ENCODE measurements at regions of chr11 and their contacts with region 1.

Region 1: GRCh38 chr11:6635082-6635932 is 16.1 kb upstream of the TPP1 start:
- DNase-seq: peak in 2 of 4 experiments; percentile 47 to 70
- ATAC-seq: peak; percentile 51
- H3K4me3 ChIP-seq: no peak overlapping the region
- H3K27ac ChIP-seq: peak overlapping the region; percentile 57
- H3K4me1 ChIP-seq: peaks cover 30% of the 10 kb centered on the region in 2 experiments
- H3K27me3 ChIP-seq: no peaks in the 10 kb centered on the region
- CTCF ChIP-seq: no peak
- EP300 ChIP-seq: peak; percentile 32; the same call in 1 of the 2 replicates
- POLR2A ChIP-seq: no peak
- RAD21 ChIP-seq: no peak

Region 2: GRCh38 chr11:6377902-6378639 is 257.2 kb before region 1 on chr11:
- CTCF ChIA-PET with region 1: no interaction called
- POLR2A ChIA-PET with region 1: no interaction called
- in situ Hi-C with region 1: no loop called
- intact Hi-C with region 1: loop called (anchors 10 kb)
- DNase-seq: no peak
- ATAC-seq: peak; percentile 62
- H3K4me3 ChIP-seq: no peak overlapping the region
- H3K27ac ChIP-seq: no peak overlapping the region
- H3K4me1 ChIP-seq: peaks cover 0 to 6% of the 10 kb centered on the region in 2 experiments; a peak in 2 of 5 replicates
- H3K27me3 ChIP-seq: peaks cover 15 to 23% of the 10 kb centered on the region in 2 experiments; a peak in 3 of 5 replicates
- CTCF ChIP-seq: no peak
- EP300 ChIP-seq: no peak
- POLR2A ChIP-seq: no peak
- RAD21 ChIP-seq: no peak

Region 3: GRCh38 chr11:6619004-6619745 is 16.1 kb before region 1 on chr11 and contains the start of gene TPP1:
- CTCF ChIA-PET with region 1: no interaction called
- POLR2A ChIA-PET with region 1: interaction called, 13 read pairs
- in situ Hi-C with region 1: no loop called
- intact Hi-C with region 1: loop called (anchors 2 kb)
- DNase-seq: peak; percentile 92 to 97 (median 94)
- ATAC-seq: peak; percentile 97
- H3K4me3 ChIP-seq: peak within 1 kb of the TSS; percentile 71
- H3K27ac ChIP-seq: peak within 1 kb of the TSS; percentile 86
- H3K4me1 ChIP-seq: peaks cover 8 to 36% of the 10 kb centered on the region in 2 experiments
- H3K27me3 ChIP-seq: peaks cover 0 to 9% of the 10 kb centered on the region in 2 experiments; a peak in 1 of 5 replicates
- CTCF ChIP-seq: no peak
- EP300 ChIP-seq: no peak; the same call in 1 of the 2 replicates
- POLR2A ChIP-seq: peak; percentile 78
- RAD21 ChIP-seq: 0 out of 4 replicates have a peak, but pooled peaks of 1 of the 2 experiments have one; percentile 3
- polyA plus RNA-seq, gene TPP1: 9.4 to 15.7 TPM

Region 4: GRCh38 chr11:6646918-6647679 is 11.8 kb after region 1 on chr11:
- CTCF ChIA-PET with region 1: no interaction called
- POLR2A ChIA-PET with region 1: interaction called, 12 read pairs
- in situ Hi-C with region 1: no loop called
- intact Hi-C with region 1: no loop called
- DNase-seq: no peak
- ATAC-seq: peak; percentile 44
- H3K4me3 ChIP-seq: no peak overlapping the region
- H3K27ac ChIP-seq: no peak overlapping the region
- H3K4me1 ChIP-seq: peaks cover 20 to 43% of the 10 kb centered on the region in 2 experiments
- H3K27me3 ChIP-seq: no peaks in the 10 kb centered on the region; a peak in 1 of 5 replicates
- CTCF ChIP-seq: no peak
- EP300 ChIP-seq: no peak
- POLR2A ChIP-seq: no peak
- RAD21 ChIP-seq: no peak

Region 5: DNA sequence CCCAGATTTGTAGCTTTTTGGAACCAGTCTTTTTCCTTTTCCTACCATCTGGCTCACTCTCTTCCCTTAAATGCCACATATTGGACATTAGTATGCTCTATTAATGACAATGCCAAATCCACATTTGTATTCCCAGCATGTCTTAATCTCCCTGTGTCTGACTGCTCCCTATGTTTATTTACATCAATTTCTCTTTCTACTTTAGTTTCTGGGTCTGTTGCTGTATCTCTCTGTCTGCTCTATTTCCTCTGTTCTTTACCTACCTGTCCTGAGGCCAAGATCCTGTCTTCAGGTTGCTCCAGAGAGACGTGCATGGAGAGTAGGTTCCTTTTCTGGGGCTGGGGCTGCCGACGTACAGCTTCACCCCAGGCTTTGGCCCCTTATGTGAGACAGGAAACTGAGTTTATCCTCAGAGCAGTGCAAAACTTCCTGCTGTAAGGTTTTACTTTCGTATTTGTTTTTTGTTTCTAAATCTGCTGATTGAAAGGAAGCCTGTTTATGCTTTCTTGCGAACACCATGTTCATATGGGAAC is 110.8 kb after region 1 on chr11:
- CTCF ChIA-PET with region 1: no interaction called
- POLR2A ChIA-PET with region 1: no interaction called
- in situ Hi-C with region 1: no loop called
- intact Hi-C with region 1: no loop called
- DNase-seq: no peak
- ATAC-seq: peak; percentile 49
- H3K4me3 ChIP-seq: no peak overlapping the region
- H3K27ac ChIP-seq: peak overlapping the region; percentile 72
- H3K4me1 ChIP-seq: peaks cover 0 to 50% of the 10 kb centered on the region in 2 experiments
- H3K27me3 ChIP-seq: no peaks in the 10 kb centered on the region
- CTCF ChIP-seq: no peak
- EP300 ChIP-seq: no peak
- POLR2A ChIP-seq: no peak
- RAD21 ChIP-seq: no peak

Measured in K562 (cell line).